Gastrocnemius medialis (tissue), 4 donors: ENCODE measurements at regions of chr7 and their contacts with region 1.

Region 1: GRCh38 chr7:35537067-35538023 is 157.6 kb downstream of the HERPUD2 start:
- DNase-seq: peak; percentile 40 to 51
- ATAC-seq: peak; percentile 88 to 96
- H3K4me3 ChIP-seq: peak overlapping the region; percentile 48 to 57 (median 50)
- H3K27ac ChIP-seq: no peak overlapping the region
- H3K4me1 ChIP-seq: peaks cover 0 to 4% of the 10 kb centered on the region in 2 donors
- H3K27me3 ChIP-seq: no peaks in the 10 kb centered on the region
- CTCF ChIP-seq: peak; percentile 64 to 91 (median 82)
- POLR2A ChIP-seq: no peak

Region 2: GRCh38 chr7:34823640-34824258 is 713.6 kb before region 1 on chr7:
- in situ Hi-C with region 1: no loop called
- intact Hi-C with region 1: loop called (anchors 10 kb)
- DNase-seq: no peak
- ATAC-seq: no peak
- H3K4me3 ChIP-seq: no peak overlapping the region
- H3K27ac ChIP-seq: no peak overlapping the region
- H3K4me1 ChIP-seq: no peaks in the 10 kb centered on the region
- H3K27me3 ChIP-seq: no peaks in the 10 kb centered on the region
- CTCF ChIP-seq: peak; percentile 37 to 76 (median 61)
- POLR2A ChIP-seq: no peak

Region 3: DNA sequence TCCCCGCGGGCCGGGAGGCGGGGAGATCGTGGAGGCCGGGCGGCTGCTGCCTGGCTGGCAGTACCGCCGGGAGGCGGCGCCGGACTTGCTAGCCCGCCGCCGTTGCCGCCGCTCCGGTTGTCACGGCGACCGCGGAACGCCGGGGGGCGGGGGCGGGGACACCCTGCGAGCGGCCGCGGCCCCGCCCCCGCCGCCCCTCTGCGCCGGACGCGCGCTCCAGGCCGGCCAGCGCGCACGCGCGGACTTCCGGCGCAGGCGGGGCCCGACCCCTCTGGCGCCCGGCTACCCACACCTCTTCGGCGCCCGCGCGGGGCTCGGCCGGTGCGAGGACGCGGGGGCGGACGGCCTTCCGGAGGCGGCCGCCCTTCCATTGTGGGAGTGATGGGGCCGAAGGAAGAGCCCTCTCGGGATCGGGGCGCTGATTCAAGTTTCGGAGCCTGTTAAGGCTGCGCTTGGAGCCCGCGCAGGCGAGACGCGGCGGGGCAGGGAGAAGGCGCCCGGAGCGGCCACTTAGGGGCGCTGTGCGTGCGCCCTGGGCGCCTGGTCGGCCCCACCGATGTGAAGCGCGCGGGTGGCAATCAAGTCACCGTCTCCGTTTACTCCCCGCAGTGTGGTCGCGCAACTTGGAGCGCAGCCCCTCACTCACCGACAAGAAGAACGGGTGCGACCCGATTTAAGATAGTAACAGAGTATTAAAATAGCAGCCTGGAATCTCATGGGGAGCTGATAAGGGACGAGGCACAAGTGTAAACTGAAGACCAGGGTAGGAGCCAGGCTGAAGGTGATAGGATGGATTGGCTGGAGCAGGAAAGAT is 499.6 kb before region 1 on chr7:
- in situ Hi-C with region 1: no loop called
- intact Hi-C with region 1: loop called (anchors 2 kb)
- DNase-seq: peak; percentile 84 to 90
- ATAC-seq: peak; percentile 89 to 92
- H3K4me3 ChIP-seq: peak overlapping the region; percentile 71 to 87 (median 78)
- H3K27ac ChIP-seq: peak overlapping the region; percentile 80 to 93 (median 88)
- H3K4me1 ChIP-seq: peaks cover 9 to 12% of the 10 kb centered on the region in 2 donors
- H3K27me3 ChIP-seq: no peaks in the 10 kb centered on the region
- CTCF ChIP-seq: peak; percentile 68 to 91 (median 83)
- POLR2A ChIP-seq: peak in 1 of 2 donors; percentile 31

Region 4: DNA sequence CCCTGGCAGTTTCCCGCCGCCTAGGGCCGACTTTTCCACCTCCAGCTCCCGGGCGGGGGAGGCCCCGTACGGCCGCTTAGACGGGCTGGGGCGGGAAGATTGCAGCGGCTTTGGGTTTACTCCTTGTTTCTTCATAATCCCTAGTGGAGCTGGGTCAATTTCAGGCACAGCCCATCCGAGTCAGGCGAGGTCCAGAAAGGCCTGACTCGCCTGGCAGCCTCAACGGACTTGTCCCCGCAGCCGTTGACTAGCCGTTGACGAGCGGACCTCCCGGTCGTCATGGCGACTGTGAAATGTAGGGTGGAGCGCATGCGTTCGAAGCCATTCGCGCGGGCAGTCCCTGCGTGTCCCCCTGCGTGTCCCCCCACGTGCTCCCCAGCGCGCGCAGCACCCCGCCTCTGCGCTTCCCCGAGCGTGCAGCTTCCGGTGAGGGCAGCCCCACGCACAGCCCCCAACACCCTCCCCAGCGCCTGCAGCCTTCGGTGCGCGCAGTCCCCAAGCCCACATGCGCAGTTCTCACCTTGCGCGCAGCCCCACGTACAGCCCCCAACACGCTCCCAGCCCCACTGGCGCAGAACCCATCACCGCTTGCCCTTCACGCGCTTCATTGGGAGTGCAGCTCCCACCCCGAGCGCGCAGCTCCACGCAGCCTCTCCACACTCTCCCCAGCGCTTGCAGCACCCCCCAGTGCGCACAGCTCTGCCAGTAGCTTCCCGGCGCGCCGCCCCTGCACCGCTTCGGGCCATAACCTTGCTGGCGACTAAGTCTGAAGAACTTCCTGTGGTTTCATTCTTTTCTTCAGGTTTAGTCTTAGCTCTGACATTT is 351.2 kb before region 1 on chr7:
- in situ Hi-C with region 1: loop called in 1 of 4 experiments (anchors 25 kb)
- intact Hi-C with region 1: no loop called
- DNase-seq: no peak
- ATAC-seq: no peak
- H3K4me3 ChIP-seq: peak overlapping the region; percentile 36 to 47 (median 42)
- H3K27ac ChIP-seq: no peak overlapping the region
- H3K4me1 ChIP-seq: peaks cover 0 to 3% of the 10 kb centered on the region in 2 donors
- H3K27me3 ChIP-seq: peaks cover 3 to 14% (median 12%) of the 10 kb centered on the region in 3 donors
- CTCF ChIP-seq: no peak
- POLR2A ChIP-seq: no peak

Region 5: GRCh38 chr7:35424869-35425495 is 112.4 kb before region 1 on chr7:
- in situ Hi-C with region 1: loop called in 1 of 4 experiments (anchors 10 kb)
- intact Hi-C with region 1: loop called (anchors 10 kb)
- DNase-seq: no peak
- ATAC-seq: no peak
- H3K4me3 ChIP-seq: no peak overlapping the region
- H3K27ac ChIP-seq: no peak overlapping the region
- H3K4me1 ChIP-seq: no peaks in the 10 kb centered on the region
- H3K27me3 ChIP-seq: peaks cover 0 to 5% (median 0%) of the 10 kb centered on the region in 3 donors
- CTCF ChIP-seq: peak; percentile 24 to 71 (median 41)
- POLR2A ChIP-seq: no peak

Region 6: GRCh38 chr7:35505066-35505465 is 32.3 kb before region 1 on chr7:
- in situ Hi-C with region 1: no loop called
- intact Hi-C with region 1: no loop called
- DNase-seq: no peak
- ATAC-seq: no peak
- H3K4me3 ChIP-seq: no peak overlapping the region
- H3K27ac ChIP-seq: no peak overlapping the region
- H3K4me1 ChIP-seq: no peaks in the 10 kb centered on the region
- H3K27me3 ChIP-seq: no peaks in the 10 kb centered on the region
- CTCF ChIP-seq: no peak
- POLR2A ChIP-seq: no peak